ENCODE measurements at regions of chr14 and their contacts with region 1.

Region 1: DNA sequence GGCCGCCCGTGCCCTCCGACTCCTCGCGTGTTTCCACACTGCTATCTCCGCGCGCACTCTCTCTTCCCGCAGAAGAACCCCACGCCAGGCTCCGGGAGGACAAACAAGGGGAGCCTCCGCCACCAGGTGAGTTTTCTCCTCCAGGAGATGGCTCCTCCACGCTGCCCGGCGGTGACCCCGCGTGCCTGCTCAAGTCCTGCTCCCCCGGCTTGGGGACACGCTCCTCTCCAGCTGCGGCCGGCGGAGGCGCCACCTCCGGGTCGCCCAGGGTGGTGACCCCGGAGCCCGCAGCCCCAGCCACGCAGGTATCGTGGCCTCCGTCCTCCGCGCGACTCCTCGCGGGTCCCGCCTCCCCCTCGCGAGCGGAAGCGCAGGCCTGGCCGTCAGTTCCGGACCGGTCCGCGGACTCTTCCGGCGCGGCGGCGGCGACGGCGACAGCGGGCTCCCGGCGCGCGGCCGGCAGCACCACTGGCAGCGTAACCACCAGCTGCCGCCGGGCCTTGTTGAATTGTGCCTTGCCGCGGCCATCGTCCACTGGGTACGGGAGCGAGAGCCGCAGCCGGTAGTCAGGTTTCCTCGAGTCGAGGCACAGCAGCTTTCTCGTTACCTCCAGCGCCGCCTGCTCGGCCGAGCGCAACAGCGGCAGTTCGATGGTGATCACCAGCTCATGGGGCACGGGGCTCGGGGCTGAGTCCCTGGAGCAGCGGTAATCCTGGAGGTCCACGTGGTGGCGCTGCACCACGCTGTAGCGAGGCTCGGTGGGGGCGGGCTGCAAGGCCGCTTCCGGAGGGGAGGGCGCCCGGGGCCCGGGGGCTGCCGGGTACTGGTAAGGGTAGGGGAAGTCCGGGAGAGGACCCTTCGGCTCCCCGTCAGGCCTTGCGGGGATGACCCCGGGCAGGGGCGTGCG is 1.2 kb downstream of the DNAAF2 start:
- DNase-seq: peak; percentile 98
- H3K4me3 Mint-ChIP-seq: peak overlapping the region; percentile 99
- H3K27ac Mint-ChIP-seq: peak overlapping the region; percentile 93
- H3K4me1 Mint-ChIP-seq: peaks cover 29% of the 10 kb centered on the region
- H3K27me3 Mint-ChIP-seq: no peaks in the 10 kb centered on the region

Region 2: GRCh38 chr14:49585803-49586672 is 47.9 kb before region 1 on chr14 and contains the start of gene RPS29:
- intact Hi-C with region 1: loop called (anchors 1 kb)
- DNase-seq: peak; percentile 99
- H3K4me3 Mint-ChIP-seq: peak within 1 kb of the TSS; percentile 89
- H3K27ac Mint-ChIP-seq: peak within 1 kb of the TSS; percentile 99
- H3K4me1 Mint-ChIP-seq: peaks cover 35% of the 10 kb centered on the region
- H3K27me3 Mint-ChIP-seq: peaks cover 3% of the 10 kb centered on the region
- total RNA-seq, gene RPS29: 1,960 and 2,033 TPM in 2 replicates

Region 3: DNA sequence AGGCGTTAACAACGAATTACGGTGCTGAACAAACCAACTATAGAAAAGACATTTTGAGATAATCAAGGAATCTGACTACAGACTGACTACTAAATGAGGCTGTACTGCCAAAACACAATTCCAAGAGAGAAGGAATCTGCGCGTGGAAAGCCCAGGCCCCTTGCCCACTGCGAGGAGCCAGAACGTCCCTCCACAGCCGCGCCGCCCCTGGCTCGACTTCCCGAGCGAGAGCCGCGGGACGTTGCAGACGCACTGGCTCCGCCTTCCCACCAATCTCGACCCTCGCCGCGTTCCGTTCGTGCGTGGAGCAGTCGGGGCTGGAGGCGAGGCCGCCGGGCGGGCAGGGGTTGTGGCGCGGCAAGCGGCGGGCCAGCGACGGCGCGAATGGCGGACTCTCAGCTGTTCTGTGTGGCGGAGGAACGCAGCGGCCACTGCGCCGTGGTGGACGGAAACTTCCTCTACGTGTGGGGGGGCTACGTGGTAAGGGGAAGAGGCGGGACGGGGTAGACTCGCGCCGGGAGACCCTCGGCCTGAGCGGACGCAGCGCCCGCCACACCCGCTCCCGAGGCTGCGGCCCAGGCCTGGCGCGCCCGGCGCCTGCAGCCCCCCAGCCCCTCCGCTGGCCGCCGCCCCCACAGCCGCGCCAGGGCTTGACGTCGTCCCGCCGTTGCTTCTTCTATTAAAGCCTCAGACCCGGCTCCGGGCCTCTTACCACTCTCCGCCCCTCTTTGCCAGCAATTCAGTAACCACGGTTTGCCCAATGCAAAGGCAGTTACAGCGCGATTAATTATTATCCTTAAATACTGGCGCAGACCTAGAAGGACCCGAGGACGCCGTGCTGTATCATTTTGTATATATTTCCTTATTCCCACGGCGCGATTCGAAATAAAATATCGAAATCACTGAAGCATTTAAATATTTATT is 59.2 kb after region 1 on chr14 and contains the start of gene KLHDC1:
- intact Hi-C with region 1: loop called (anchors 2 kb)
- DNase-seq: peak; percentile 95
- H3K4me3 Mint-ChIP-seq: peak within 1 kb of the TSS; percentile 79
- H3K27ac Mint-ChIP-seq: peak within 1 kb of the TSS; percentile 84
- H3K4me1 Mint-ChIP-seq: peaks cover 18% of the 10 kb centered on the region
- H3K27me3 Mint-ChIP-seq: no peaks in the 10 kb centered on the region
- total RNA-seq, gene KLHDC1: 0.95 and 0.96 TPM in 2 replicates

Region 4: GRCh38 chr14:49828640-49829039 is 194.7 kb after region 1 on chr14:
- intact Hi-C with region 1: loop called (anchors 1 kb)
- DNase-seq: no peak
- H3K4me3 Mint-ChIP-seq: no peak overlapping the region
- H3K27ac Mint-ChIP-seq: no peak overlapping the region
- H3K4me1 Mint-ChIP-seq: peaks cover 5% of the 10 kb centered on the region
- H3K27me3 Mint-ChIP-seq: no peaks in the 10 kb centered on the region

Region 5: GRCh38 chr14:50311975-50312733 is 678.3 kb after region 1 on chr14 and contains the starts of genes DMAC2L and L2HGDH:
- intact Hi-C with region 1: loop called (anchors 1 kb)
- DNase-seq: peak; percentile 98
- H3K4me3 Mint-ChIP-seq: peak within 1 kb of the TSS; percentile 96
- H3K27ac Mint-ChIP-seq: peak within 1 kb of the TSS; percentile 99
- H3K4me1 Mint-ChIP-seq: peaks cover 39% of the 10 kb centered on the region
- H3K27me3 Mint-ChIP-seq: no peaks in the 10 kb centered on the region
- total RNA-seq, gene DMAC2L: 16.3 and 18.8 TPM in 2 replicates
- total RNA-seq, gene L2HGDH: 16.8 and 18.0 TPM in 2 replicates

Region 6: GRCh38 chr14:50823051-50823761 is 1189.3 kb after region 1 on chr14:
- intact Hi-C with region 1: loop called (anchors 10 kb)
- DNase-seq: no peak
- H3K4me3 Mint-ChIP-seq: peak overlapping the region; percentile 77
- H3K27ac Mint-ChIP-seq: peak overlapping the region; percentile 87
- H3K4me1 Mint-ChIP-seq: peaks cover 64% of the 10 kb centered on the region
- H3K27me3 Mint-ChIP-seq: no peaks in the 10 kb centered on the region

Measured in activated CD4-positive, alpha-beta T cell treated with anti-CD3 and anti-CD28 coated beads, Interleukin-2, amount 10 ng/mL, durations not matched to agents 24 days and 14 days (primary cell).